Motor neuron (in vitro differentiated cells): ENCODE measurements at regions of chr15 and their contacts with region 1.

Region 1: DNA sequence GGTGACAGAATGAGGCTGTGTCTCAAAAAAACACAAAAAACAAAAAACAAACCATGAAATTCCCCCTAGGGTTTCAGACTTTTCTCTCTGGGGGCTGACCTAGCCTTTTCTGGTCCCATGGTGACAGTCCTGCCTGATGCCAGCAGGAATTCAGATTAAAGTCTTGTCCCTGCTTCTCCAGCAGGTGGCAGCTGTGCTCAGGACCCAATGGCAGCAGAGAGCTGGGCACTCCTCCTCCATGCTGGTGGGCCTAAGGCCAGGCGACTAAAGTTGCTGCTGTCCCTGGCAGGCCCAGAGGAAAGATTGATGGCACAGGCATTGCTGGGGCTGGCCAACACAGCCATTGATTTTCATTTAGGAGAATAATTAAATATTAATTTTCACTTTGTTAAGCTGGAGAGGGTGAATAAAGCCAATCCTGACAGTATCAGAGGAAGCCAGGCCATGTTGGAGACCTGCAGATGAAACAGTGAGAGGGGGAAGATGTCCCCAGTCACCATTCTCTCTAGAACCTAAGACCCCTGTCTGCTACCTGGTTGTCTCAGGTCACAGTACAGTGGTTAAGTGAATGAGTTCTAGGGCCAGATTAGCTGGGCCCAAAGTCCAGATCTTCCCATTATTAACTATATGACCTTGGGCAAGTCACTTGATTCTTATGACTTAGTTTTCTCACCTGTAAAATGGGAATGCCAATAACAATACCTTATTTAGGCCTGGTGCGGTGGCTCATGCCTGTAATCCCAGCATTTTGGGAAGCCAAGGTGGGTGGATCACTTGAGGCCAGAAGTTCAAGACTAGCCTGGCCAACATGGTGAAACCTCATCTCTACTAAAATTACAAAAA is 7.1 kb downstream of the CELF6 start:
- ATAC-seq: peak; percentile 69 to 94 (median 86)
- H3K4me3 ChIP-seq: no peak overlapping the region
- H3K27ac ChIP-seq: no peak overlapping the region
- H3K4me1 ChIP-seq: no peaks in the 10 kb centered on the region

Region 2: DNA sequence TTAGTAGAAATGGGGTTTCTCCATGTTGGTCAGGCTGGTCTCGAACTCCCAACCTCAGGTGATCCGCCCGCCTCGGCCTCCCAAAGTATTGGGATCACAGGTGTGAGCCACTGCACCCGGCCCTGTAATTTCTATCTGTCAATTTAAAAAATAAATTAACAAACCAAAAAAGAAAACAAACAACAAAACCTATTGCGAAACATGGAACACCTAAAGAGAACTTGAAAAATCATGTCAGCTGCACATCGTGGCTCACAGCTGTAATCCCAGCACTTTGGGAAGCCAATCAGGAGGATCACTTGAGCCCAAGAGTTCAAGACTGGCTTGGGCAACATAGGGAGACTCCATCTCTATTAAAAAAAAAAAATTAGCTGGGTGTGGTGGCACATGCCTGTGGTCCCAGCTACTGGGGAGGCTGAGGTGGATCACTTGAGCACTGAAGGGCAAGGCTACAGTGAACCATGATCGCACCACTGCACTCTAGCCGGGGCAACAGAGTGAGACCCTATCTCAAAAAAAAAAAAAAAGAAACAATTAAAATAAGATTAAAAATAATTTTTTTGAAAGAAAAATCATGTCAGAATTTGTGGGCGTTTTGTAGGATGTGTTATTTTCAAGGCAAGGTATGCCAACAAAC is 60.0 kb before region 1 on chr15:
- in situ Hi-C with region 1: loop called in 1 of 9 experiments (anchors 10 kb)
- ATAC-seq: no peak
- H3K4me3 ChIP-seq: no peak overlapping the region
- H3K27ac ChIP-seq: no peak overlapping the region
- H3K4me1 ChIP-seq: no peaks in the 10 kb centered on the region